ENCODE measurements at regions of chr14 and their contacts with region 1.

Region 1: GRCh38 chr14:60064491-60065072 is 27.1 kb upstream of the PCNX4 start:
- DNase-seq: peak; percentile 6
- H3K4me3 ChIP-seq: no peak overlapping the region
- H3K27ac ChIP-seq: no peak overlapping the region
- H3K4me1 ChIP-seq: peaks cover 7% of the 10 kb centered on the region
- H3K27me3 ChIP-seq: no peaks in the 10 kb centered on the region
- CTCF ChIP-seq: peak; percentile 60 to 62

Region 2: GRCh38 chr14:59964251-59965007 is 100.2 kb before region 1 on chr14:
- CTCF ChIA-PET with region 1: no interaction called
- dilution Hi-C with region 1: no loop called
- in situ Hi-C with region 1: no loop called
- intact Hi-C with region 1: loop called (anchors 2 kb)
- DNase-seq: no peak
- H3K4me3 ChIP-seq: no peak overlapping the region
- H3K27ac ChIP-seq: no peak overlapping the region
- H3K4me1 ChIP-seq: no peaks in the 10 kb centered on the region
- H3K27me3 ChIP-seq: peaks cover 2% of the 10 kb centered on the region
- CTCF ChIP-seq: no peak

Region 3: GRCh38 chr14:60164712-60165546 is 100.3 kb after region 1 on chr14 and contains the start of gene DHRS7:
- CTCF ChIA-PET with region 1: interaction called, 3 read pairs
- dilution Hi-C with region 1: no loop called
- in situ Hi-C with region 1: loop called in 1 of 2 experiments (anchors 10 kb)
- intact Hi-C with region 1: loop called (anchors 1 kb)
- DNase-seq: peak; percentile 70
- H3K4me3 ChIP-seq: peak within 1 kb of the TSS; percentile 87 to 100 (median 90)
- H3K27ac ChIP-seq: peak within 1 kb of the TSS; percentile 97
- H3K4me1 ChIP-seq: peaks cover 8% of the 10 kb centered on the region
- H3K27me3 ChIP-seq: no peaks in the 10 kb centered on the region
- CTCF ChIP-seq: peak; percentile 6 to 42
- total RNA-seq, gene DHRS7: 73.0 to 85.0 TPM

Region 4: DNA sequence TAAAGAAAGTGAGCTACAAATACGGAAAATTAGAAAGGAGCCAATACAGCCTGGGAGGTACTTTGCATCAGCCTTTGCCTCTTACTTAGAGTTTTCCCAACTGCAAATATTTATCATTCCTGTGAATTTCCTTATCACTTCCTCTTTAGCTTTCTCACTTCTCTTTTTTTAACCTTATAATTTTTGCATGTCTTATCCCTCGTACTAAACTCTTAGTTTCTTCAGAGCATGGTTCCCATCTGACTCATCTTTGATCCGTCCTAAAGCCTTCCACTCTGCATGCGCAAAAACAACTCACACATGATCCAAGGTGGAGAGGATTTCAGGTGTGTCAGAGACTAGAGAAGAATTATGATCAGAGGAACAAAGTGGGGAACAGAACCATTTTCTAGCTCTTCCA is 1688.0 kb after region 1 on chr14:
- CTCF ChIA-PET with region 1: no interaction called
- dilution Hi-C with region 1: no loop called
- in situ Hi-C with region 1: no loop called
- intact Hi-C with region 1: no loop called
- DNase-seq: no peak
- H3K4me3 ChIP-seq: no peak overlapping the region
- H3K27ac ChIP-seq: no peak overlapping the region
- H3K4me1 ChIP-seq: peaks cover 26% of the 10 kb centered on the region
- H3K27me3 ChIP-seq: no peaks in the 10 kb centered on the region
- CTCF ChIP-seq: no peak